BJ (cell line): ENCODE measurements at regions of chr16 and their contacts with region 1.

Region 1: DNA sequence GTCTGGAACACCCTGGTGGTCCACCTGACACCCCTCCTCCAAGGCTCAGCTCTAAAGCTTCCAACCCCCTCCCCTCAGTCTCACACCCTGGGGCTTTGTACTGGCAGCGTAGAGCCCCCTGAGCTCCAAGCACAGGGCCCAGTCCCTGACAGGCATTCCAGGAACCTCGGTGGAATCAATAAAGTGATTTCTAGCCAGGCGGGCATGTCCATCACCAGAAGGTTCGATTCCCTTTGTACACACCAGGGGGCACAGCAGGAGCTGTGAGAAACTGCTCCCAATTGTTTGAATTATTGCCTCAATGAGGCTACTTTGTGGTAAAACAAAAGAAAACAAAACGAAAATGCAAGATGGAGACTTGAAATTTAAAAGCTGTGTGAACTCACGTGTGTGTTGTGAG is 51.8 kb downstream of the SMPD3 start:
- DNase-seq: no peak
- H3K4me3 ChIP-seq: no peak overlapping the region
- H3K27me3 ChIP-seq: peaks cover 5% of the 10 kb centered on the region; the same call in 1 of the 2 replicates
- CTCF ChIP-seq: peak; percentile 76

Region 2: DNA sequence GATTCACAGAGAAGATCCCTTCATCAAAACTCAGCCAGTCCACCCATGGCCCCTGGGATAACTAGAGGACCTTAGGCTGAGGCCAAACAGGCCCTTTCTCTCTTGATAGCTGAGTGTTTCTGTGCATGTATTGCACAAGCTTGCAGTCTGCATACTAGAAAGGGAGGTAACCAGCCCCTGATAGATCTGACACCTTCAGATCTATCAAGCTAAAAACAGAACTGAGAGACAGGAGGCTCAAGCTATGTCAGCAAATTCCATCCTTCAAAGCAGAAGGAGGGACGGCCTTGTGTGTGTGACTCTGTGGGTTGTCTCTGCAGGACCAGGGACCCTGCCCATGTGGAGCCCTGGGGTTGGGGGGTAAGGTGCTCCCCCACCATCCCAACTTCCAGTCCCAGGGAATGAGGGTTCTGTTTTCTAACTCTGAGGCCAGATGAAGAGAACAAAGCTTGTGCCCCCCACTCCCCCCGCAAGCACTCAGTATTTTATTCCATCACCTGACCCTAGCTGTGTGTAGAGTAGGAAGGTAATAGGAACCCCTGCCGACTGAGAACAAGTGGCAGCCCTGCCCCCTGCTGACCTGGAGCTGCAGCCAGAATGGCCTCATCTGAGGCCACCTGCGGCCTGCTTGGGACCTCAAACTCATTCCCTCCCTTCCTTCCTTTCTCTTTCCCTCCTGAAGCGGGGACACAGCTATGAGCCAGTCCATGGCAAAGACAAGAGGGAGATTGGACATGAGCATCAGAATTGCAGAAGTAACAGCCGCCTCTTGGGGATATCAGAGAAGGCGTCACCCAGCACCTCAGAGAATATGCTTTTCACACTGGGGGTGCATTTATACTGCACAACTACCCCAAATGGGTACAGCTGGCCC is 12.0 kb before region 1 on chr16:
- CTCF ChIA-PET with region 1: interaction called, 25 read pairs
- POLR2A ChIA-PET with region 1: no interaction called
- DNase-seq: no peak
- H3K4me3 ChIP-seq: no peak overlapping the region
- H3K27me3 ChIP-seq: peaks cover 12% of the 10 kb centered on the region
- CTCF ChIP-seq: no peak

Region 3: DNA sequence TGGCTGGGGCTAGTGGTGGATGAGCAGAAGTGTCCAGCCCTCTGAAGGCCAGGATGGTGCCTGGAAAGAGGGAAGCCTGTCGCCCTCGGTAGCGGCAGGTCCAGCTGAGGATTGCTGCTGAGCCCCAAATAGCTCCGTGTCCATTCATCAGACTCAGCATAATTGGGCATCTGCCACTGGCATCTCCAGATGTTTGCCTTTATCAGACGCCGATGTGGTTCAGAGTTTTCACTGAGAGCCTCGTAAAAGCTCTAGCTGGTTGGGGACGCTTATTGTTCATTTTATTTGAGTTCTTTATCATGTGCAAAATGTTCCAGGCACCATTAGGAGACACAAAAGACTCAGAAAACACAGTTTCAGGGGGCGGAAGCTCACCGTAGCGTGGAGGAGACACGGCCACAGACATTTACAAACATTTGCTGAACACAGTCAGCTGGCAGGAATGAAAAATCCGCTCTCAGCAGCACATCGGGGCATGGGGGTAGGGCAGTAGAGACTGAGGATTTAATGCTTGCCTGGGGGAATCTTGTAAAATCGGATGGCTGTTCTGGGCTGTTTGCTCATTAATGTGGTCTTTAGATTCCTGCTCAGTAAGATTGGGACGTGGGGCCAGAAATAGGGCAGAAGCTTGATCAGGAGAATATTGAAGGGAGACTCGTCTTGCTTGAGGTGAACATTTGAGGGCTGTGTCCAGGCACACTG is 10.1 kb after region 1 on chr16:
- CTCF ChIA-PET with region 1: interaction called, 22 read pairs
- POLR2A ChIA-PET with region 1: no interaction called
- DNase-seq: peak; percentile 65
- H3K4me3 ChIP-seq: no peak overlapping the region
- H3K27me3 ChIP-seq: no peaks in the 10 kb centered on the region
- CTCF ChIP-seq: no peak

Region 4: GRCh38 chr16:68506331-68507053 is 110.0 kb after region 1 on chr16:
- CTCF ChIA-PET with region 1: interaction called, 212 read pairs
- POLR2A ChIA-PET with region 1: no interaction called
- DNase-seq: no peak
- H3K4me3 ChIP-seq: no peak overlapping the region
- H3K27me3 ChIP-seq: no peaks in the 10 kb centered on the region
- CTCF ChIP-seq: no peak

Region 5: DNA sequence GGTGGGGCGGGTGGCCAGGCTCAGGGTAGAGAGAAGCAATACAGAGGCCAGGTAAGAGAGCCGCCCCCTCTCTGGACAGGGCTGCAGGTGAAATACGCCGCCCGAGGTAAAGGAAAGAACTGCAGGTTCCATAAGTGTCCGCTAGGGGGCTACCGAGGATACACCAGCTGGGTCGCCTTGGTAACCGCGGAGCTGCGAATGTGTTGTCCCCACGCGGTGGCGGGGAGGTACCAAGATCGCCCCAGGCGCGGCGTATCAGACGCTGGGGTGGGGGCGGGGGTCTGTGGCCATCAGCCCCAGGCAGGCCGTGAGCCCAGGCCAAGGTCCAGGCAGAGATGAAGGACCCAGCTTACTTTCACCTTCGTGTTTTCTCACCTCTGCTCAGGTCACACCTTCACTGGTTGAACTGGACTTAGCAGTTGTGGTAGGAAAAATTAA is 124.2 kb after region 1 on chr16:
- CTCF ChIA-PET with region 1: interaction called, 21 read pairs
- POLR2A ChIA-PET with region 1: no interaction called
- DNase-seq: no peak
- H3K4me3 ChIP-seq: peak overlapping the region; percentile 31
- H3K27me3 ChIP-seq: no peaks in the 10 kb centered on the region
- CTCF ChIP-seq: peak; percentile 99